ENCODE measurements at regions of chr12 and their contacts with region 1.

Region 1: DNA sequence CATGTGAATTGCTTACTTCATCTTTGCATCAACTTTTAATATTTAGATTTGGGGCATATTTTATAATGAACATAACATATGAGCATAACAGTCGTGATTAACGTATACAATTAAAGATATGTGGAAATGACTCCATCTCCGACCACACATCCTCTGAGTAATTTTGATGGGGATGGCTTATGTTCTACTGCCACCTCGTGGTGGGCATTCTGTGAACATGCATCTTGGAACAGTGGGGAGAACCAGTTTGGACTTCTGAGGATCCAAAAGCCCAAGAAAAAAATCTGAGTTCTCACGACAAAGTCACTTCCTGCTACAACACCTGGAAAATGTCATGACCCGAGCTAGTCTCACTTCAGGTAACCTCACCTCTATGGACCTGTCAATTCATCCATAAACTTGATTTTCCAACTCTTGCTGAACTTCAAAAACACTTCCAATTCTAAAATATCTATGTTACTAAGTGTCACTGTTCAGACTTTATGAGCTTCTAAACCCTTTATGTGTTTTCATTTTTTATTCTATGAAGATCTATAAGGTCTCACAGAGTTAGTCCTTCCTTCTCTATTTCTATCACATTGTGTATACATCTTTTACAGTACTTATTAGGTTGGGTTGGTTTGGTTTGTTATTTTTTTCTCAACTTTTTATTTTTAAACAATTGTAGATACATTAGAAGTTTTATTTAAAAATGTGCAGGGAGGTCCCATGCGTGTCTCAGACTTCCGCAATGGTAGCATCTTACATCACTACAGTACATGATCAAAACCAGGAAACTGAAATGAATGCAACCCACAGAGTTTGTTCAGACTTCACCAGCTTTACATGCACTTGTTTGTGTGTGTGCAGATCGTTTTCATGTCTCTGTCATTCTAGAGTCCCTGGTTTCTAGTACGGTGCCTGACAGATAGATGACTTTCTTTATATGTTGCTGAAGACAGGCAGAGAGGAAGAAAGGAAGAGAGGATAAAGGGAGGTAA is 38.2 kb upstream of the STAB2 start:
- DNase-seq: peak in 1 of 2 experiments; percentile 79
- H3K4me3 ChIP-seq: no peak overlapping the region
- H3K27ac ChIP-seq: no peak overlapping the region
- H3K4me1 ChIP-seq: no peaks in the 10 kb centered on the region
- H3K27me3 ChIP-seq: peaks cover 0 to 1% (median 0%) of the 10 kb centered on the region in 4 experiments; a peak in 1 of 7 replicates
- CTCF ChIP-seq: peak; percentile 49 to 85 (median 75)
- EP300 ChIP-seq: no peak
- POLR2A ChIP-seq: no peak
- RAD21 ChIP-seq: peak; percentile 98 to 99

Region 2: GRCh38 chr12:102939670-102940222 is 609.2 kb before region 1 on chr12:
- CTCF ChIA-PET with region 1: interaction called, 13 read pairs
- POLR2A ChIA-PET with region 1: no interaction called
- DNase-seq: no peak
- H3K4me3 ChIP-seq: no peak overlapping the region
- H3K27ac ChIP-seq: no peak overlapping the region
- H3K4me1 ChIP-seq: no peaks in the 10 kb centered on the region; a peak in 1 of 7 replicates
- H3K27me3 ChIP-seq: no peaks in the 10 kb centered on the region
- CTCF ChIP-seq: peak in 2 of 3 experiments; percentile 44 to 59; a peak in 3 of 4 replicates
- EP300 ChIP-seq: no peak
- POLR2A ChIP-seq: no peak
- RAD21 ChIP-seq: peak; percentile 77

Region 3: DNA sequence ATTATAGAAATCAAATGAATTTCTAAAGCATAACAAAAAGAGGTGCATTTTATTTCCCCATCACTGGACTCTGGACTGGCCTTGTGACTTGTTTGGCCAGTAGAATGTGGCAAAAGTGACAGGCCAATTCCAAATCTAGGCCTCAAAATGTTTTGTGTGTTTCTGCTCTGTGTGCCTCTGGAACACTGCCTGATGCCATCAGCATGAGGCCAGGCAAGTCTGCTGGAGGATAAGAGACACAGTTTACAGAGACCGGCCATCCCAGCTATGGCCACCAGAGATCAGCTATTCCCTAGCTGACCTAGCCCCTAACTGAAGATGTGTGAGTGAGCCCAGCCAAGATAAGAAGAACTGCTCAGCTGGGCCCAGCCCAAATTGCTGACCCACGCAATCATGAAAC is 558.5 kb before region 1 on chr12:
- CTCF ChIA-PET with region 1: interaction called, 20 read pairs
- POLR2A ChIA-PET with region 1: no interaction called
- DNase-seq: no peak
- H3K4me3 ChIP-seq: no peak overlapping the region
- H3K27ac ChIP-seq: no peak overlapping the region
- H3K4me1 ChIP-seq: no peaks in the 10 kb centered on the region
- H3K27me3 ChIP-seq: no peaks in the 10 kb centered on the region
- CTCF ChIP-seq: peak; percentile 24 to 50 (median 36)
- EP300 ChIP-seq: no peak
- POLR2A ChIP-seq: no peak
- RAD21 ChIP-seq: peak; percentile 57 to 76

Region 4: DNA sequence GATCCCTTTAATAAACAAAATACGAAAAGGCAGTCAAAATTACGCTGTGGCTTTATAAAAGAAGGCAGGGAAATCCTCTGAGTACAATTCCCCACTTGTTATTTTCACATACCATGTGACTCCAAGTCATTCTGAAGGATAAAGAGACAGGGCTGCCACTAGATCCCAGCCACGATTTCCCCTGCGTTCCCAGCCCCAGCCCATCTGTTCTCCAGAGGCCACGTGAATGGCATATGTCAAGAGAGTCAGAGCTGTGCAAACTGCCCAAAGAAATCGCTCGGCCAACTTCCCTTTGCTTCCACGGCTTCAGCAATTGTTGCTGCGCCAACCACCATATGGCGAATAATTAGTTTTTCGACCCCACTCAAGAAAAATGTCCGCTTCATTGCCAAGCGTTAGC is 214.4 kb before region 1 on chr12:
- CTCF ChIA-PET with region 1: interaction called, 20 read pairs
- POLR2A ChIA-PET with region 1: no interaction called
- DNase-seq: no peak
- H3K4me3 ChIP-seq: no peak overlapping the region
- H3K27ac ChIP-seq: no peak overlapping the region
- H3K4me1 ChIP-seq: peaks cover 0 to 3% (median 0%) of the 10 kb centered on the region in 4 experiments; a peak in 2 of 7 replicates
- H3K27me3 ChIP-seq: no peaks in the 10 kb centered on the region
- CTCF ChIP-seq: no peak
- EP300 ChIP-seq: no peak
- POLR2A ChIP-seq: no peak
- RAD21 ChIP-seq: no peak

Region 5: DNA sequence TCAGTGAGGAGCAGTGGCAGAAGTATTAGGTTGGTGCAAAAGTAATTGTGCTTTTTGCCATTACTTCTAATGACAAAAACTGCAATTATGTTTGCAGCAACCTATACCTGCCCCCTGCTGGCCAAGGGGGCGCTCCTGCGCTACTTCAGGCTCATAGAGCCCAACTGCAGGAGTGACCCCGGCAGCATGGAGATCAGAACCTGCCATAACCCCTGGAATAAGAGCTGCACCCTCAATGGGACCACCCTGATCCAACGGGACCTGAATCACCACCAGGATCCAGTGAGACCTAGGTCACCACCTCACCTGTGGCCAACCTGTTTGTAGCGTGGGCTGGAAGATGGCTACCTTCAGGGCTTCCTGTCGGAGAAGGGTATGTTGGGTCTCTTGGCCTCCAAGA is 44.9 kb before region 1 on chr12:
- CTCF ChIA-PET with region 1: interaction called, 25 read pairs
- POLR2A ChIA-PET with region 1: no interaction called
- DNase-seq: peak in 1 of 2 experiments; percentile 76
- H3K4me3 ChIP-seq: no peak overlapping the region
- H3K27ac ChIP-seq: no peak overlapping the region
- H3K4me1 ChIP-seq: no peaks in the 10 kb centered on the region
- H3K27me3 ChIP-seq: no peaks in the 10 kb centered on the region
- CTCF ChIP-seq: peak; percentile 75 to 82 (median 77)
- EP300 ChIP-seq: no peak
- POLR2A ChIP-seq: no peak
- RAD21 ChIP-seq: peak; percentile 76 to 84

Region 6: GRCh38 chr12:103530307-103531066 is 18.4 kb before region 1 on chr12:
- CTCF ChIA-PET with region 1: interaction called, 12 read pairs
- POLR2A ChIA-PET with region 1: no interaction called
- DNase-seq: no peak
- H3K4me3 ChIP-seq: no peak overlapping the region
- H3K27ac ChIP-seq: no peak overlapping the region
- H3K4me1 ChIP-seq: no peaks in the 10 kb centered on the region
- H3K27me3 ChIP-seq: no peaks in the 10 kb centered on the region
- CTCF ChIP-seq: no peak
- EP300 ChIP-seq: no peak
- POLR2A ChIP-seq: no peak
- RAD21 ChIP-seq: no peak

Region 7: GRCh38 chr12:103632554-103633216 is 83.8 kb after region 1 on chr12:
- CTCF ChIA-PET with region 1: interaction called, 26 read pairs
- POLR2A ChIA-PET with region 1: no interaction called
- DNase-seq: peak; percentile 86 to 97
- H3K4me3 ChIP-seq: no peak overlapping the region
- H3K27ac ChIP-seq: no peak overlapping the region
- H3K4me1 ChIP-seq: no peaks in the 10 kb centered on the region
- H3K27me3 ChIP-seq: no peaks in the 10 kb centered on the region
- CTCF ChIP-seq: peak; percentile 100
- EP300 ChIP-seq: no peak
- POLR2A ChIP-seq: no peak
- RAD21 ChIP-seq: peak; percentile 92 to 94

Measured in H1 (cell line).